ENCODE measurements at regions of chr7 and their contacts with region 1.

Region 1: DNA sequence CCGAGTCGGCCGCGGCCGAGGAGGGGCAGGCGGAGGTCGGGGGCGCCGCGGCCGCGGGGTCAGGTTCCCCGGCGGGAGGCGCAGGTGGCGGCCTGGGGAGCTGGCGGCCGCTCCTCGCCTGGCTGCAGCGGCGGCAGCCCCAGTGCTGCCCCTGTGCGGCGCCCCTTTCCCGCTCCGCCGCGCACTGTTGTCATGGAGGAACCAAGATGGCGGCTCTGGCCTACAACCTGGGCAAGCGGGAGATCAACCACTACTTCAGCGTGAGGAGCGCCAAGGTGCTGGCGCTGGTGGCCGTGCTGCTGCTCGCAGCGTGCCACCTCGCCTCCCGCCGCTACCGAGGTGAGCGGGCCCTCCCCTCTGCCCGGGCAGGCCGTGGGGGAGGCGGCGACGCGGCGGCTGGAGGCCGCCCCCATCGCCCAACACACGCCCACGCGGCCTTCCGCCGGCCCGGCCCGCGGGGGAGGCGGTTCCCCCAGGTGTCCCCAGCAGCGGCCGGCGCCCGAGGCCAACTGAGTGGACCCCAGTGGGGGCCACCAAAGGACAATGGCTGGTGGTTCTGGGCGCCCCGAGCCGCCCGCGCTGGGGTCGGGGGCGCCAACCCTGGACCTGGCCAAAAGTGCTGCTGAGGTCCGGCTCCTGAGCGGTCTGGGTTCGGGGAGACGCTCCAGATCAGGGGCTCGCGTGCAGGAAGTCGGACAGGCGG is 421 bp downstream of the CASD1 start:
- DNase-seq: peak; percentile 68 to 79 (median 73)
- H3K4me3 ChIP-seq: peak overlapping the region; percentile 54 to 88
- H3K4me3 Mint-ChIP-seq: peak overlapping the region; percentile 83 to 94 (median 90)
- H3K27ac ChIP-seq: peak overlapping the region; percentile 83
- H3K27ac Mint-ChIP-seq: peak overlapping the region; percentile 71 to 94 (median 91)
- H3K4me1 ChIP-seq: peaks cover 43% of the 10 kb centered on the region
- H3K4me1 Mint-ChIP-seq: peaks cover 38 to 51% (median 45%) of the 10 kb centered on the region in 4 donors
- H3K27me3 ChIP-seq: no peaks in the 10 kb centered on the region
- H3K27me3 Mint-ChIP-seq: no peaks in the 10 kb centered on the region

Region 2: GRCh38 chr7:94004024-94004951 is 505.7 kb before region 1 on chr7 and contains the start of gene BET1:
- CTCF ChIA-PET with region 1: no interaction called
- POLR2A ChIA-PET with region 1: no interaction called
- intact Hi-C with region 1: loop called (anchors 5 kb)
- DNase-seq: peak; percentile 91 to 96 (median 92)
- H3K4me3 ChIP-seq: peak within 1 kb of the TSS; percentile 95 to 96
- H3K4me3 Mint-ChIP-seq: peak within 1 kb of the TSS; percentile 97 to 99 (median 99)
- H3K27ac ChIP-seq: peak within 1 kb of the TSS; percentile 90
- H3K27ac Mint-ChIP-seq: peak within 1 kb of the TSS; percentile 96 to 100 (median 99)
- H3K4me1 ChIP-seq: peaks cover 22% of the 10 kb centered on the region
- H3K4me1 Mint-ChIP-seq: peaks cover 25 to 51% (median 36%) of the 10 kb centered on the region in 4 donors
- H3K27me3 ChIP-seq: no peaks in the 10 kb centered on the region
- H3K27me3 Mint-ChIP-seq: peaks cover 2 to 5% of the 10 kb centered on the region in 2 donors
- total RNA-seq, gene BET1: 40.8 to 45.7 TPM

Region 3: DNA sequence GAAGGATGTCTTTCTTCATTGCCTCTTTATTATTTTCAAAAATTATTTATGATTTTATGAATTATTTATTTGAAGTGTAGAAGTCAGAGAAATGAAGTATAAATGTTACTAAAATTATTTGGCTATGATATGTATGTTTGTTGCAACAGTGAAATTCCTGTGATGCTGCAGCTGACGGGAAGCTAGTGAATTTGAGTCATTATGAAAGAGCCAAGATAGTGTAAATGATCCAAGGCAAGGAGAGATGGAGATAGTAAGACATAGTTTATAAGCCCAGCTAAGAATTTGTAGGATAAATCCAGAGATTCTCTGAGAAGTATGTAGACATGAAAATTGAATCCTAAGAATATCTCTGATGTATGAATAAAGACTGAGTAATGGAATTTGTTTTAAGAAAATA is 30.4 kb after region 1 on chr7:
- CTCF ChIA-PET with region 1: no interaction called
- POLR2A ChIA-PET with region 1: no interaction called
- intact Hi-C with region 1: no loop called
- DNase-seq: no peak
- H3K4me3 ChIP-seq: no peak overlapping the region
- H3K4me3 Mint-ChIP-seq: no peak overlapping the region
- H3K27ac ChIP-seq: no peak overlapping the region
- H3K27ac Mint-ChIP-seq: no peak overlapping the region
- H3K4me1 ChIP-seq: no peaks in the 10 kb centered on the region
- H3K4me1 Mint-ChIP-seq: no peaks in the 10 kb centered on the region
- H3K27me3 ChIP-seq: no peaks in the 10 kb centered on the region
- H3K27me3 Mint-ChIP-seq: no peaks in the 10 kb centered on the region